WTC11 (cell line): ENCODE measurements at regions of chr19 and their contacts with region 1.

Region 1: DNA sequence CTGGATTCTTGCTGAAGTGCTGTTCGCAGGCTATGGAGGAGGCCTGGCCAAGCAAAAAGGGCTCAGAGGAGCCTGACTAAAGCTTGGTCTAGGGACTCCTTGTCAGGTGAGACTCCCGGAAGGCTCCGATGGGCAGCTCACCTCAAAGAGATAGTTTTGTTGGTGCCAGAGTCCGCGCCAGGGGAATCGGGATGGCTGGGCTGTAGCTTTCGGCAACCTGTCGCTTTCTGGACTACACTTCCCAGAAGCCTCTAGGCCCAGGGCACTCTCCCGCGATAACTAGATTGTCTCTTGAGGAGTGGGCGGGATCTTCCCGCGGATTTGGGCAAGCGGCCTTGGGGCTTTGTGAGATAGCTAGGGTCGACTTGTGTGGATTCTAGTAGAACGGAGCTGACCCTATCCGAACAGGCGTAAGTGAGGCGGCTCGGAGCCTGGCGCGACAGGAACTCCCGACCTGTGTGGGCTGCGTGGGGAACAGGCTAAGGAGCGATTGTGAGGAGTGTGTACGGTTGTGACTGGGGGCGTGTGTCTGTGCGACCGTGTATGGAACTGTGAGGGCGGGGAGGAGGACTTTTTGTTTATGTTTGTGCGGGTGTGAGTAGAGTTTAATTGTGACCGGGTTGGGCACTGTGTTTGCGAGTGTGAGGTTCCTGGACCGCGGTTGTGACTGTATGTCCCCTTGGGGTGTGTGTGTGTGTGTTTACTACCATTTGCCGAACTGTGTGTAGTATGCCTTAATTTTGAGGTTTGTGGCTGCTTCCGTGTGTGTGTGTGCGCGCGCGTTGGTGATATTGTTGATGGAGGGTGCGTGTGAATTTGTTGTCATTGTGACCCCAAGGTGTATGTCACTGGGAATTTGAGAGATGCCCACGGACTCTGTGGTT is at the start of gene ZNF345:
- DNase-seq: peak; percentile 91
- ATAC-seq: peak; percentile 88
- H3K4me3 Mint-ChIP-seq: no peak within 1 kb of the TSS
- H3K27ac Mint-ChIP-seq: no peak within 1 kb of the TSS
- H3K4me1 Mint-ChIP-seq: peaks cover 3% of the 10 kb centered on the region
- H3K27me3 Mint-ChIP-seq: no peaks in the 10 kb centered on the region
- CTCF ChIP-seq: no peak
- total RNA-seq, gene ZNF345: 4.5 to 6.4 TPM (median 5.2 TPM) in 3 replicates

Region 2: DNA sequence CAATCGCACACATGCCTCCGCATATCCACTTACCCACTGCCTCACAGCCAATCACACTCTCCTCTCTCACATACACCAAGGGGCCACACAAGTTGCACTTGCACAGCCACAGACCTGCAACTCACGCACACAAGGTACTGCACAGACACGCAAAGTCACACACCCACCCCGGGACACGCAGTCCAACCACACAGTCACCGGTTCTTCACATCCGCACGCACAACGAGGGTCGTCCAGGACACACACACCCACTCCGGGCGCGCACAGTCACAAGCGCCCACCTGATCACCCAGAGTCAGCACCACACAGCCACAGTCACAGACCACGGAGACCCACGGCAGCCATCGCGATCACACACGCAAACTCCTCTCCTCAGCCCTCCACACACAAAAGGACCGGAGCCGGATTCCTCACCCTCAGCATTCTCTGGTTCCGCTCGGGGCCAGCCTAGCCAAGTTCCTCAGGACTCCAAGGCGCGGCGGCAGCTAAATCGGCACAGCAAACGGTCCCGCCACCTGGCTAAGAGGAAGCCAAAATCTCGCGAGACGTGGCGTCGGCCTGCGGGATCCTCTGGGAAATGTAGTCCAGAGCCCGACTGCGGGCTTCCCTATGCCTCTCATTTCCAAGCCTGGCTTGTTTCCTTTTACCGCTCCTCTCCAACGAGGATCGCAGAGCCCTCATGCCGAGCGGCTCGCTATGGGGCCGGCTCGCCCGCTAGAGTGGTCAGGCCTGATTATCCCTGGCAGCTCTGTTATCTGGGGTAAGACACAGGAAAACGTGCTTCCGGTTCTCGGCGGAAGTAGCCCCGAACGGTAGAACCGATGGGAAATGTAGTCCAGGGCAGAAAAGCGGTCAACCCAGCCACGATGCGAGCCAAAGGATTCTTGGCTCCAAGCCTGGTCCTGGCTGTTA is 78.2 kb before region 1 on chr19 and contains the start of gene ZNF850:
- CTCF ChIA-PET with region 1: interaction called, 6 read pairs
- POLR2A ChIA-PET with region 1: interaction called, 13 read pairs
- DNase-seq: peak; percentile 96
- ATAC-seq: peak; percentile 82
- H3K4me3 Mint-ChIP-seq: peak within 1 kb of the TSS; percentile 94
- H3K27ac Mint-ChIP-seq: peak within 1 kb of the TSS; percentile 99
- H3K4me1 Mint-ChIP-seq: peaks cover 15% of the 10 kb centered on the region
- H3K27me3 Mint-ChIP-seq: no peaks in the 10 kb centered on the region; the same call in none of the 2 replicates
- CTCF ChIP-seq: no peak
- total RNA-seq, gene ZNF850: 46.9 to 65.9 TPM (median 47.2 TPM) in 3 replicates

Region 3: DNA sequence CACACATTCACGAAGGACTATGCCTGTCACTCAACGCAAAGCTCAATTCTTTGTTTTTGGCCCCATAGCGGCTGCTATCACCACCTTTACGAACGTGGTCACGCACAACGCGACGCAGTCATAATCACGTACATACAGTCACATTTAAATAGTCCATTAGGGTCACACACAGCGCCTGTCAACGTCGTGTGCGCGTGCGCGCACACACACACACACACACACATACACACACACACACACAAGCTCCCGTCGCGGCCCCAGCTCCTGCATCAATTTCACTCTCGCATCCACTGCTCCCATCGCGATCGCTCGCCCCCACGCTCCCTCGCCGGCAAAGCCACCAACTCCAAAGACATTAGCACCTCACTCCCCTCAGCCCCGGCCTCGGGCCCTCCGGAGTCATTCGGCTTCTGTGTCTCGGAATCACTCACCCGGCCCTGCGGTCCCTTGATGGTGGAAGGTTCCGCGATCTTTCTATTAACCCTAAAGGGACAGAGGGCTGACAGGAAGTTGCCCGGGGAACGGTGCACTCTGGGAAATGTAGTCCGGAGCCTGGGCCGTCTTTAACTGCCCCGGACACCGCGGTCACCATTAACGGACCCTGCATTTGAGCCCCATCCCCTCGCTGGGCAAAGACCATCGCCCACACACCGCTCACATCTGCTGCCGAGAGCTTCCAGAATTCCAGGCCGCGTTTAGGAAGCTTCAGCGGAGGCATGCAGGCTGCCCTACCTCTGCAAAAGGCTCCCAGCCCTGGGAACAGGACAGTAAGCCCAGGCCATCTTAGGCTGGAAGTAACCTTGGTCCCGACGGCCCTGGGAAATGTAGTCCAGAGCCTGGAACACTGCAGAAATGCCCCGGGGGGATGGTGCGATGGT is 12.7 kb before region 1 on chr19 and contains the start of gene ZNF790:
- CTCF ChIA-PET with region 1: interaction called, 16 read pairs
- POLR2A ChIA-PET with region 1: interaction called, 35 read pairs
- DNase-seq: peak; percentile 90
- ATAC-seq: peak; percentile 95
- H3K4me3 Mint-ChIP-seq: no peak within 1 kb of the TSS
- H3K27ac Mint-ChIP-seq: 0 out of 2 replicates have a peak within 1 kb of the TSS, but pooled peaks have one; percentile 24
- H3K4me1 Mint-ChIP-seq: peaks cover 5% of the 10 kb centered on the region; the same call in 1 of the 2 replicates
- H3K27me3 Mint-ChIP-seq: no peaks in the 10 kb centered on the region
- CTCF ChIP-seq: no peak
- total RNA-seq, gene ZNF790: 5.9 to 8.6 TPM (median 6.8 TPM) in 3 replicates

Region 4: DNA sequence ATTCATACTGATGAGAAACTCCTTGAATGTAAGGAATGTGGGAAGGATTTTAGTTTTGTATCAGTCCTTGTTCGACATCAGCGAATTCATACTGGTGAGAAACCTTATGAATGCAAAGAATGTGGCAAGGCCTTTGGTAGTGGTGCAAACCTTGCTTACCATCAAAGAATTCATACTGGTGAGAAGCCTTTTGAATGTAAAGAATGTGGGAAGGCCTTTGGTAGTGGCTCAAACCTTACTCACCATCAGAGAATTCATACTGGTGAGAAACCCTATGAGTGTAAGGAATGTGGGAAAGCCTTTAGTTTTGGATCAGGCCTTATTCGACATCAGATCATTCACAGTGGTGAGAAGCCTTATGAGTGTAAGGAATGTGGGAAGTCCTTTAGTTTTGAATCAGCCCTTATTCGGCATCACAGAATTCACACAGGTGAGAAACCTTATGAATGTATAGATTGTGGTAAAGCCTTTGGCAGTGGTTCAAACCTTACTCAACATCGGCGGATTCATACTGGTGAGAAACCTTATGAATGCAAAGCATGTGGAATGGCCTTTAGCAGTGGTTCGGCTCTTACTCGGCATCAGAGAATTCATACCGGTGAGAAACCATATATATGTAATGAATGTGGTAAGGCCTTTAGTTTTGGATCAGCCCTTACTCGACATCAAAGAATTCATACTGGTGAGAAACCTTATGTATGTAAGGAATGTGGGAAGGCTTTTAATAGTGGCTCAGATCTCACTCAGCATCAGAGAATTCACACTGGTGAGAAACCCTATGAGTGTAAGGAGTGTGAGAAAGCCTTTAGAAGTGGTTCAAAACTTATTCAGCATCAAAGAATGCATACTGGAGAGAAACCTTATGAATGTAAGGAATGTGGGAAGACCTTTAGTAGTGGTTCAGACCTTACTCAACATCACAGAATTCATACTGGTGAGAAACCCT is 26.5 kb after region 1 on chr19:
- CTCF ChIA-PET with region 1: no interaction called
- POLR2A ChIA-PET with region 1: no interaction called
- DNase-seq: no peak
- ATAC-seq: no peak
- H3K4me3 Mint-ChIP-seq: no peak overlapping the region
- H3K27ac Mint-ChIP-seq: no peak overlapping the region
- H3K4me1 Mint-ChIP-seq: no peaks in the 10 kb centered on the region
- H3K27me3 Mint-ChIP-seq: peaks cover 7% of the 10 kb centered on the region
- CTCF ChIP-seq: no peak